Sciatic nerve (tissue), 2 donors: ENCODE measurements at regions of chr11 and their contacts with region 1.

Region 1: DNA sequence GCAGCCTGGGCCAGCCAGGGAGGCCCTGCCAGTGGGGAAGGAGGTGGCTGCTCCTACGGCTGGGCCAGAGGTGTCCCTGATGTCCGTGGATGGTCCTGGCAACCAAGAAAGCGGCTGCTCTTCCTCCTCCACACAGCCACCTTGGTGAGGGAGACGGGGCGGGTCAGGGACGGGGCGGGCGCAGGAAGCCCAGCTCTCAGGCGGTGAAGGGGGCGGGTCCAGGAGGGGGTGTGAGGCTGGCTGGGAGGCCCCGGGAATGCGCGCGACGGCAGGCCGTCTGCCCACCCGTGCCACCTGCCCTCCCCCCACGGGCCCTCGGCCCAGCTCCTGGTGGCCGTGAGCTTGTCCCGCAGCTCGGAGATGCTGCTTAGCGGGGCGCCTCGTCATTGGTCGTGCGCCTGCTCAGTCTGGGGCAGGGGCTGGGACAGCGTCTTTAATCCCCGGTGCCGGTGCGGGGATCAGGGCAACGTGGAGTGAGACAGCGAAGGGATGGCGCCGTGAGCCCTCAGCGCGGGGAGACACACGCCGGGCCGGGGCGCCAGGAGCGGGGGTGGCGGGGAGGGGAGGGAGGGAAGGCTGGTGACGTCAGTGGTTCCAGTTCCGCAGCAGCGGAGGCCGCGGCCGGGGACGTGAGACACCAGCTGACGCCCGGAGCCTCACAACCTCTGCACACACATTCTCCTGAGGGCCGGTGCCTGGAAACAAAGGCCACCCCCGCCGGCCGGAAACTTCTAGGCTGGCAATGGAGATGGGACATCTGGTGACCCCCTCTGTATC is 6.7 kb upstream of the BRSK2 start:
- DNase-seq: peak; percentile 89
- ATAC-seq: peak; percentile 95

Region 2: DNA sequence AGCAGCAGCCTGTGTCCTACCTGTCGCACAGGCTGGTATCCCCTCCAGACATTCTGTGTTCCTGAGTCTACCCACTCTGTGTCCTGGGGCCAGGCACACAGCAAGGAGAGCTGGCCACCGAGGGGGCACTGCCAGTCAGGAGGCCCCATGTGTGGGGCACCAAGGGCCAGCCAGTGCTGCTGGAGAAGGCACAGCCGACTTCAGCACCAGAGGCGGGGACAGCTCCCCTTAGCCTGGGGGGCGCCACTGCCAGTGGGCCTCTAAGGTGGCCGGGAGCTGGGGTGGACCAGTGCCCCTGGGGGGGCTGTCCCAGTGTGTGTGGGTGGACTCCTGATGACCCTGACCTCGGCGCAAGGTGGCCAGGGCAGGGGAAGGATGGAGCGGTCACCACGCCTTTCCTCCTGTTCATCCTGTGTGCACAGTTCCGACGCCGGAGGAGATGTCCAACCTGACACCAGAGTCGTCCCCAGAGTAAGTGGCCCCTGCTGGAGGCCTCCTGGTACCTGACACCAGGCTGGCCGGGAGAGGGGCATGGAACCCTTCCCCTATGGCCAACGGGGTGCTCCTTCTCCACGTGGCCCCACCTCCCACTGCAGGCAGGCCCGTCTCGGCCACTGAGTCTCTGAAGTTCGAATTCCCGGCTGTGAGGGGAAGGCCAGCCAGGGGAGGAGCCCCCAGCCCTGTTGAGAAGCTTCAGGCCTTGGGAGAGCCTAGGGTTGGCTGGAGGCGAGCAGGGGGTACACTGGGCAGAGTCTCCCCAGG is 68.1 kb after region 1 on chr11:
- intact Hi-C with region 1: loop called (anchors 2 kb)
- DNase-seq: no peak
- ATAC-seq: no peak